ENCODE measurements at regions of chr1 and their contacts with region 1.

Region 1: DNA sequence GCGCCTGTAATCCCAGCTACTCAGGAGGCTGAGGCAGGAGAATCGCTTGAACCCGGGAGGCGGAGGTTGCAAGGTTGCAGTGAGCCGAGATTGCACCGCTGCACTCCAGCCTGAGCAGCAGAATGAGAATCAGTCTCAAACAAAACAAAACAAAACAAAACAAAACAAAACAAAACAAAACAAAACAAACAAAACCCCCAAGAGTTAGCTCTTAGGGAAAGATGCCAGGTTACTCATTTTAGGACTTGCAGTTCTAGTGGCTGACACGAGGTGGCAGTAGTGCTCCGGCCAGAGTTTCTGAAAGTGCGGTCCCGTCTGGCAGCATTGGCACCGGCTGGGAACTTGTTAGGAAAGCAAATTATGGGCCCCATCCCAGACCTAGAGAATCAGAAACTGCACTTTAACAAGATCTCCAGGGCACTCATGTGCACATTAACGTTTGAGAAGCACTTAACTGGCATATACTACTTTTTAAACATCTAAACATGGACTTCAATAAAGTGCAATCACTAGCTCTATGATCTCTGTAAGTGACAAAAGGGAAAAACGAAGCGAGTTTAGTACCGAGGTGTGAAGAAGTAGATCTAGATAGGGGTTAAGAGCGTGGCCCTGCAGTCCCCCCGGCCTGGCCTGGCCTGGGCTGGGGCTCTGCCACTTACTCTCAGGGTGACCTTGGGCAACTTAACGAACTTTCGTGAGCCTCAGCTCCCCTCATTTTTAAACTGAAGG is 41.9 kb upstream of the TNFRSF1B start:
- DNase-seq: peak; percentile 66 to 75
- H3K4me3 ChIP-seq: no peak overlapping the region
- H3K27ac ChIP-seq: peak overlapping the region in 1 of 2 donors; percentile 58
- H3K4me1 ChIP-seq: no peaks in the 10 kb centered on the region
- H3K27me3 ChIP-seq: no peaks in the 10 kb centered on the region
- CTCF ChIP-seq: peak; percentile 84 to 99 (median 96)
- POLR2A ChIP-seq: no peak

Region 2: DNA sequence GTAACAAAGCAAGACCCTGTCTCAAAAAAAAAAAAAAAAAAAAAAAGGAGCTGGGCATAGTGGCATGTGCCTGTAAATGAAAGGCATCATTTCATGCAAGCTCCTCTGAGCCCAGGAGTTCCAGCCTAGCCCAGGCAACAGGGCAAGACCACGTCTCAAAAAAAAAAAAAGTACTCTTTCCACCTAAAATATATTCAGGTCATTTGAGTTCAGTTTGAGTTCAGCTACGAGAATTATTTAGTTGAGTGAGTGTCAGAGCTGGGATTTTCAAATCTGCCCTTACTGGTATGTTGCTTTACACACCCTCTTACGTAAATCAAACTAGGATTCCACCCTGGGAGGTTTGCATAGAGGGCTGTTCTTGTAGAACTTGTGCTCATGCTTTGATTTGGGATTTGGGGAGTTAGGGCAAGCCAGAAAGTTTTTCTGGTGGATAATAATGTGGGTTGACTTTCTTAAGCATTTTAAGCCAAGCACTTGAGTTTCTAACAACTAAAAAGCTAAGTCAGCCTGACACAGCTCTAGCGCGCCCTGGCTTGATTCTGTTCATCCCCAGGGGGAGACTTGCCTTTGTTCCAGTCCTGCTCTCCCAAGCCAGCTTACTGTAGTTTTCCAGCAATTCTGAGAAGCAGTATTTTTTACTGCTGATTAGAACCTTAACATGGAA is 1737.3 kb before region 1 on chr1:
- intact Hi-C with region 1: loop called (anchors 10 kb)
- DNase-seq: no peak
- H3K4me3 ChIP-seq: peak overlapping the region in 1 of 3 donors; percentile 32
- H3K27ac ChIP-seq: peak overlapping the region; percentile 26 to 72
- H3K4me1 ChIP-seq: no peaks in the 10 kb centered on the region
- H3K27me3 ChIP-seq: no peaks in the 10 kb centered on the region
- CTCF ChIP-seq: no peak
- POLR2A ChIP-seq: no peak

Region 3: DNA sequence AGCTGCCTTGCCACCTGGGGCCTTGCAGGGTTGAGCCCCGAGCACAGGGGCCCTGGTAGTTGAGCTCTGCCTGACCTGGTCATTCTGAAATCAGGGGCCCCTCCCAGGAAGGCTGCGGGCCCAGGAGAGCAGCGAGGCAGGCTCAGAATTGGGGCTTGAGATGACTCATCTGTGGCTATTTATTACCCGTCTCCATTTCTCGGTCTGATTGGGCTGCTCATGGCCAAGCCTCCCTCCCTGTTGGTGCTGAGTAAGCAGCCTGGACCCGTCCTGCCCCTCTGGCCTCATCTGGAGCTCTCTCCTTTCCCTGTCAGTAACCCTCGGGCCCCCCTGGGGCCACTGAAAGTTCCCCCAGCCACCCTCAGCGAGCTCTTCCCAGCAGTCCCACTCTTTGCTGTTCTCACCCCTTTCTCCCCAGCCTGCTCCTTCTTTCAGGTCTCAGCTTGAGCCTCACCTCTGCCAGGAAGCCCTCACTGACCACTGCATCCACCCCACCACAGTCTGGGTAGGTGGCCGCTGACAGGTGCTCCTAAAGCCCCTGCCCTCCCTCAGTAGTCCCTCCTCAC is 72.8 kb before region 1 on chr1:
- intact Hi-C with region 1: no loop called
- DNase-seq: no peak
- H3K4me3 ChIP-seq: no peak overlapping the region
- H3K27ac ChIP-seq: peak overlapping the region; percentile 26 to 48
- H3K4me1 ChIP-seq: no peaks in the 10 kb centered on the region
- H3K27me3 ChIP-seq: no peaks in the 10 kb centered on the region
- CTCF ChIP-seq: no peak
- POLR2A ChIP-seq: no peak

Region 4: GRCh38 chr1:12206792-12207424 is 82.1 kb after region 1 on chr1:
- intact Hi-C with region 1: loop called (anchors 2 kb)
- DNase-seq: no peak
- H3K4me3 ChIP-seq: no peak overlapping the region
- H3K27ac ChIP-seq: no peak overlapping the region
- H3K4me1 ChIP-seq: no peaks in the 10 kb centered on the region
- H3K27me3 ChIP-seq: no peaks in the 10 kb centered on the region
- CTCF ChIP-seq: no peak
- POLR2A ChIP-seq: no peak